Colonic mucosa (tissue), 4 donors: ENCODE measurements at regions of chr4 and their contacts with region 1.

Region 1: DNA sequence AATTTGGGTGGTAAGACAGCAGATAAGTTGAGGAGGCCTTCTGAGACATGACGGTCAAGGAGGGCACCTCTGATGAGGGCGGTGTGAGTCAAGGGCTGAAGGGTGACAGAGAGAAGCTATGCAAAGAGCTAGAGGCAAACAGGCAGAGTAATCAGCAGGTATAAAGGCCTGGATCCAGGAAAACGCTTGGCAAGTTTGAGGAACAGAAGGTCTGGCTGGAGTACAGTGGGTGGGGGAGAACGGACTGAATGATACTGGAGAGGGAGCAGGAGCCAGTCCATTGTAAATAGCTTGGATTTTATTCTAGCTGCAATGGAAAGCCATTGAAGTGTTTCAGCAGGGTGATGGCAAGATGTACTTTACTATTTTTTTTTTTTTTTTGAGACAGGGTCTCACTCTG is 39.3 kb downstream of the RAB33B start:
- DNase-seq: no peak
- H3K4me3 ChIP-seq: no peak overlapping the region
- H3K27ac ChIP-seq: no peak overlapping the region
- H3K4me1 ChIP-seq: no peaks in the 10 kb centered on the region
- H3K27me3 ChIP-seq: no peaks in the 10 kb centered on the region
- CTCF ChIP-seq: no peak

Region 2: DNA sequence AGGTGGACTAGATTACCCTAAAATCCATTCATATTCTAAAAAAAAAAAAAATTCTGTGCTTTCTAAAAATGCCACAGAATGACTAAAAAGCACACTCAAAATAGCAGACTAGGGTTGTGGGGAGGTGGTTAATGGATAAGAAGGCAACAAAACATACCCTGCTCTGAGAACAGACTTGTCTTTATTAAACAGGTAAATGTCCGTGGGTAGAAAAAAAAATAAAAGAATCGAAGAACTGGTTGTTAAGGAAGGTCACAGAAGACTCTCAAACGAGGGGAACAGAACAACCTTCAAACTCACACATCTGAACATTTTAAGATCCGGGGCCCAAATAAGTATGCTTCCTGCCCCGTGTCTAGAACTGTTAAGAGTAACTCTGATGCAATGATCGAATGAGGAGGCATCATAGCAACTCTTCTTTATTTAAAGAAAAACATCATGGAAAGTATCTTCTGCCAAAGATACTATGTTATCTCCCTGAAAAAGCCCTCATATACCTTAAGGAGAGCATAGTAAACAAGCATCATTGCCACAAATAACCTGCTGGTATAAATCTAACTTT is 384.5 kb before region 1 on chr4:
- intact Hi-C with region 1: no loop called
- DNase-seq: no peak
- H3K4me3 ChIP-seq: no peak overlapping the region
- H3K27ac ChIP-seq: no peak overlapping the region
- H3K4me1 ChIP-seq: no peaks in the 10 kb centered on the region
- H3K27me3 ChIP-seq: no peaks in the 10 kb centered on the region
- CTCF ChIP-seq: no peak

Region 3: GRCh38 chr4:139560406-139561104 is 67.4 kb after region 1 on chr4:
- intact Hi-C with region 1: loop called (anchors 10 kb)
- DNase-seq: no peak
- H3K4me3 ChIP-seq: no peak overlapping the region
- H3K27ac ChIP-seq: no peak overlapping the region
- H3K4me1 ChIP-seq: no peaks in the 10 kb centered on the region
- H3K27me3 ChIP-seq: no peaks in the 10 kb centered on the region
- CTCF ChIP-seq: no peak

Region 4: GRCh38 chr4:139633661-139634060 is 140.5 kb after region 1 on chr4:
- intact Hi-C with region 1: loop called (anchors 10 kb)
- DNase-seq: no peak
- H3K4me3 ChIP-seq: no peak overlapping the region
- H3K27ac ChIP-seq: no peak overlapping the region
- H3K4me1 ChIP-seq: no peaks in the 10 kb centered on the region
- H3K27me3 ChIP-seq: no peaks in the 10 kb centered on the region
- CTCF ChIP-seq: peak; percentile 19